ENCODE measurements at regions of chr9 and their contacts with region 1.

Region 1: DNA sequence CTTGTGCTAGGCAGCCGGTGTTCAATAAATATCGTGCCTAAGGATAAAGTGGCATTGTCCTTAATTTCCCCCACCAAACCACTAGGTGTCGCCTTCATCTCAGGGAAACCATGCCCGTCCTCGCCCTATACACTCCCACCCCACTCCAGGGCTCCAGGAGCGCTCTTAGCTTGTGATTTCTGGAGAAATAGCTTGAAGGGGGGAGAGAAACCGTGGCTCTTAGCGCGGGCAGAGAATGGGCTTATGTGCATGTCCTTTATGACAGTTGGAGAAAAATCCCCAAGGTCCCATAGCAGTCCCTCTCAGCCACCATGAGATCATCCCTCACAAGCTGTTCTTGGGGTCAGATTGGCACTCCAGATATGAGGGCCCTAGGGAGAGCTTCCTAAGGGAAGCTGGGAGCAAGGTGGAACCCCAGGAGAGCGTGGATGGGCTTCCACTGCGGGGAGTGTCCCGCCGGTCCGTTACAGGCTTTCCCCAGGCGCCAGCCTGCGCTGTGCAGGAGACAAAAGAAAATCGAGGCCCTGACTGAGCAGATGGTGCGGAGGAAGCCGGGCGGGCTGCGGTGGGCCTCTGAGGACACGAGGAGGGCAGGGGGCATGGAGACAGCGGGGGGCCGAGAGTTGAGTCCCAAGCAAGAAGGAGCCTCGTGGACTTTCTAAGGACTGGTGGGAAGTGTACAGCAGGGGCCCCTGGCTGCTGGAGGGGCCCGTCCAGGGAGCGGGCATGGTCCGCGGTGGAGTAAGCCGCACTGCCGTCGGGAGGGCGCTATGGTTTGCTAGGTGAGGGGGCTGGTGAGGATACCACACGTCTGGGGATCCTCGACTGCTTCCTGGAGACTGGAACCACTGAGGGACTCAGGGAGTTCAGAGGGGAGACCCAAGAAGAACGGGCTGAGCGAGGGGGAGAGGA is 750 bp upstream of the NPR2 start:
- DNase-seq: peak; percentile 58 to 69 (median 64)
- H3K4me3 ChIP-seq: no peak overlapping the region
- H3K4me3 Mint-ChIP-seq: no peak overlapping the region
- H3K27ac ChIP-seq: no peak overlapping the region
- H3K27ac Mint-ChIP-seq: peak overlapping the region in 2 of 7 donors; percentile 27 to 47
- H3K4me1 ChIP-seq: no peaks in the 10 kb centered on the region
- H3K4me1 Mint-ChIP-seq: peaks cover 7 to 12% (median 9%) of the 10 kb centered on the region in 4 donors
- H3K27me3 ChIP-seq: no peaks in the 10 kb centered on the region
- H3K27me3 Mint-ChIP-seq: no peaks in the 10 kb centered on the region

Region 2: DNA sequence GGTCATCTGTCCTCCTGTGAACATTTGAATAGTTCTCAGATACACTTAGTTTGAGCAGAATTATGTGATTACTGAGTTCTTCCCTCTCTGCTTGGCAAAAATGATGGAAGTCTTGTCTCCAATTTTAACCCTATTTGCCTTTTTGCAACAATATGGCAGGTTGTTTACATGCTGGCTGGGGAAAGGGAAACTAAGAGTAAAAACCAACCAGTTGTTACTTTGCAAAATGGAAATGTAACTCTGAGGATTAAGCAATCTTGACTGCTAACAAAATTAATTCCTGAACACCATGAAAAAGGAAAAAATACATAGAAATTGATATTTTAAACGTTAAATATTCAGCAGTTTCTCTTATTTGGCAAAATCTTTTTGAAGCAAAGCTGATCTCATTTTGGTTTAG is 151.0 kb before region 1 on chr9:
- CTCF ChIA-PET with region 1: no interaction called
- POLR2A ChIA-PET with region 1: no interaction called
- intact Hi-C with region 1: no loop called
- DNase-seq: no peak
- H3K4me3 ChIP-seq: no peak overlapping the region
- H3K4me3 Mint-ChIP-seq: peak overlapping the region in 4 of 8 donors; percentile 6 to 72 (median 30)
- H3K27ac ChIP-seq: no peak overlapping the region
- H3K27ac Mint-ChIP-seq: peak overlapping the region in 5 of 7 donors; percentile 53 to 85 (median 75)
- H3K4me1 ChIP-seq: peaks cover 36% of the 10 kb centered on the region
- H3K4me1 Mint-ChIP-seq: peaks cover 25 to 77% (median 48%) of the 10 kb centered on the region in 4 donors
- H3K27me3 ChIP-seq: no peaks in the 10 kb centered on the region
- H3K27me3 Mint-ChIP-seq: no peaks in the 10 kb centered on the region

Region 3: GRCh38 chr9:35778496-35778895 is 12.1 kb before region 1 on chr9:
- CTCF ChIA-PET with region 1: interaction called, 25 read pairs
- POLR2A ChIA-PET with region 1: no interaction called
- intact Hi-C with region 1: no loop called
- DNase-seq: no peak
- H3K4me3 ChIP-seq: no peak overlapping the region
- H3K4me3 Mint-ChIP-seq: no peak overlapping the region
- H3K27ac ChIP-seq: no peak overlapping the region
- H3K27ac Mint-ChIP-seq: no peak overlapping the region
- H3K4me1 ChIP-seq: no peaks in the 10 kb centered on the region
- H3K4me1 Mint-ChIP-seq: peaks cover 0 to 5% (median 4%) of the 10 kb centered on the region in 4 donors
- H3K27me3 ChIP-seq: no peaks in the 10 kb centered on the region
- H3K27me3 Mint-ChIP-seq: no peaks in the 10 kb centered on the region

Region 4: GRCh38 chr9:36980148-36980974 is 1189.7 kb after region 1 on chr9:
- CTCF ChIA-PET with region 1: no interaction called
- POLR2A ChIA-PET with region 1: no interaction called
- intact Hi-C with region 1: no loop called
- DNase-seq: no peak
- H3K4me3 ChIP-seq: no peak overlapping the region
- H3K4me3 Mint-ChIP-seq: no peak overlapping the region
- H3K27ac ChIP-seq: no peak overlapping the region
- H3K27ac Mint-ChIP-seq: no peak overlapping the region
- H3K4me1 ChIP-seq: peaks cover 1% of the 10 kb centered on the region
- H3K4me1 Mint-ChIP-seq: peaks cover 2 to 6% (median 3%) of the 10 kb centered on the region in 4 donors
- H3K27me3 ChIP-seq: no peaks in the 10 kb centered on the region
- H3K27me3 Mint-ChIP-seq: peaks cover 26 to 51% of the 10 kb centered on the region in 2 donors

Measured in CD4-positive, alpha-beta memory T cell (primary cell).